MCF 10A (cell line): ENCODE measurements at regions of chr12 and their contacts with region 1.

Region 1: GRCh38 chr12:122356192-122356635 is 66.3 kb downstream of the CLIP1 start:
- DNase-seq: peak; percentile 69
- H3K4me3 Mint-ChIP-seq: no peak overlapping the region
- H3K27ac Mint-ChIP-seq: no peak overlapping the region
- H3K4me1 Mint-ChIP-seq: peaks cover 6% of the 10 kb centered on the region
- H3K27me3 Mint-ChIP-seq: no peaks in the 10 kb centered on the region
- CTCF ChIP-seq: peak; percentile 78

Region 2: GRCh38 chr12:121688966-121689365 is 667.2 kb before region 1 on chr12:
- CTCF ChIA-PET with region 1: no interaction called
- POLR2A ChIA-PET with region 1: no interaction called
- intact Hi-C with region 1: no loop called
- DNase-seq: no peak
- H3K4me3 Mint-ChIP-seq: no peak overlapping the region
- H3K27ac Mint-ChIP-seq: no peak overlapping the region
- H3K4me1 Mint-ChIP-seq: peaks cover 5% of the 10 kb centered on the region
- H3K27me3 Mint-ChIP-seq: no peaks in the 10 kb centered on the region
- CTCF ChIP-seq: no peak

Region 3: GRCh38 chr12:122322501-122322900 is 33.7 kb before region 1 on chr12:
- CTCF ChIA-PET with region 1: interaction called, 17 read pairs
- POLR2A ChIA-PET with region 1: no interaction called
- intact Hi-C with region 1: no loop called
- DNase-seq: peak; percentile 56
- H3K4me3 Mint-ChIP-seq: no peak overlapping the region
- H3K27ac Mint-ChIP-seq: peak overlapping the region; percentile 28
- H3K4me1 Mint-ChIP-seq: peaks cover 13% of the 10 kb centered on the region
- H3K27me3 Mint-ChIP-seq: no peaks in the 10 kb centered on the region
- CTCF ChIP-seq: no peak

Region 4: DNA sequence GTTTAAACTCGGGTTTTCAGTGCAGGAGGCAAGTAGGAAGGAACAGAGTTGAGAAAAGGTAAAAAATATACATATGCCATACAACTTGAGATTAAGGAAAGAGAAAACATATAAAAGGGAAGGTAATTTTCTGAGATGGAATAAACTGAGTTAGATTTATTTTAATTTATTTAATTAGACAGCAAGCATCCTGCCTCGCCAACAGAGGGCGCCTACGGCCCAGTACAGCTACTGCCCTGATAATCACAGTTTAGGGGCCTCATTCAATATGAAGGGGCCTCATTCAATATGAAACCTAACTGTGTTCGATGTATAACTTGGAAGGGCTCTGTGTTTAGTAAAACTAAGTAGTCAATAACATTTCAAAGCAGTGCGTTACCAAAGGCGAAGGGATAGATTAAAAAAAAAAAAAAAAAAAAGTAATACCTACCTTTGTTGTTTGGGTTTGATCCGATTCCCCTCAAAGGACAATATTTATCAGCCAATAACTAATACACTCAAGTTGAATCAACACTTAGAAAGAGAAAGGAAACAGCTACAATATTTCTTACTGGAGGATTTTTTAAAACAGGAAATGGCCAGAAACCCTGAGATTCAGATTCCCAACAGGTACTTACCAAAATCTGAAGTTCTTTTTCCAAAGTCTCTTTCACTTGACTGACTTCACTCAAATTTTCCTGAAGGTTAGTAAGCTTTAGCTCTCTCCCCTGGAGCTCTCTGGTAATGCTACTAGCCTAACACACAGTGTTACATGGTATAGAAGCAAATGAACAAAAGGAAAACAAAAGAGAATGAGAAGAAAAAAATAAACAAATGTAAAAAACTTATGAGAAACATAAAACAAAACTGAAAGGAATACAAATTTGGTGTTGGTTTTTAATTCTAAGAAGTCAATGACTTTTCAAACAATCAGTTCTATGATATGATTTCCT is 19.9 kb before region 1 on chr12:
- CTCF ChIA-PET with region 1: interaction called, 50 read pairs
- POLR2A ChIA-PET with region 1: interaction called, 8 read pairs
- intact Hi-C with region 1: no loop called
- DNase-seq: peak; percentile 34
- H3K4me3 Mint-ChIP-seq: no peak overlapping the region
- H3K27ac Mint-ChIP-seq: no peak overlapping the region
- H3K4me1 Mint-ChIP-seq: peaks cover 5% of the 10 kb centered on the region
- H3K27me3 Mint-ChIP-seq: no peaks in the 10 kb centered on the region
- CTCF ChIP-seq: peak; percentile 82

Region 5: DNA sequence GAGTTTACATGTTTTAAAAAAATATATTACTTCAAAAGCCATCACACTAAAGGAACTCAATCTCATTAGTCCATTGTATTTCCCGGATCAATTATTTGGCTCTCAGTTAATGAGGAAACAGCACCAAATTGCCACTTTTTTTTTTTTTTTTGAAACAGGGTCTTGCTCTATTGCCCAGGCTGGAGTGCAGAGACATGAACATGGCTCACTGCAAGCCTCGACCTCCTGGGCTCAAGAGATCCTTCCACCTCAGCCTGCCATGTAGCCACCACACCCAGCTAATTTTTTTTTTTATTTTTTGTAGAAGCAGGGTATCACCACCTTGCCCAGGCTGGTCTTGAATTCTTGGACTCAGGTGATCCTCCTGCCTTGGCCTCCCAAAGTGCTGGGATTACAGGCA is 11.2 kb before region 1 on chr12:
- CTCF ChIA-PET with region 1: interaction called, 32 read pairs
- POLR2A ChIA-PET with region 1: interaction called, 7 read pairs
- intact Hi-C with region 1: no loop called
- DNase-seq: no peak
- H3K4me3 Mint-ChIP-seq: no peak overlapping the region
- H3K27ac Mint-ChIP-seq: no peak overlapping the region
- H3K4me1 Mint-ChIP-seq: peaks cover 6% of the 10 kb centered on the region
- H3K27me3 Mint-ChIP-seq: no peaks in the 10 kb centered on the region
- CTCF ChIP-seq: no peak

Region 6: DNA sequence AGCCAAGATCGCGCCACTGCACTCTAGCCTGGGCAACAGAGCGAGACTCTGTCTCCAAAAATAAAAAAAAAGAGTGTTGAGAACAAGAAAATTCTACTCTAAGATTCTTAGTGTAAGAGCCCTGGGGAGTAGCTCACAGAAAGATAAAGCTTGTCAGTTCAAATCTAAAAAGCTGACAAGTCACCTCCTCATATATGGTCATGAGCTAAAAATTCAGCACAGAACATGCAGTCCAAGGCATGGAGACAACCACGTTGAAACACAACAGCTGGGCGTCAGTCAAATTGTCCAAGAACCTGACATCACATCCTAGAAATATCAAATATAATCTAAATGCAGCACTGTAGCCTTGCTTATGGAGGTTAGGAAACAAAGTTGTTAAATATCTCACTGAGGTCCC is 18.5 kb after region 1 on chr12:
- CTCF ChIA-PET with region 1: interaction called, 12 read pairs
- POLR2A ChIA-PET with region 1: no interaction called
- intact Hi-C with region 1: no loop called
- DNase-seq: no peak
- H3K4me3 Mint-ChIP-seq: no peak overlapping the region
- H3K27ac Mint-ChIP-seq: no peak overlapping the region
- H3K4me1 Mint-ChIP-seq: peaks cover 4% of the 10 kb centered on the region
- H3K27me3 Mint-ChIP-seq: no peaks in the 10 kb centered on the region
- CTCF ChIP-seq: no peak